ENCODE measurements at regions of chr5 and their contacts with region 1.

Region 1: DNA sequence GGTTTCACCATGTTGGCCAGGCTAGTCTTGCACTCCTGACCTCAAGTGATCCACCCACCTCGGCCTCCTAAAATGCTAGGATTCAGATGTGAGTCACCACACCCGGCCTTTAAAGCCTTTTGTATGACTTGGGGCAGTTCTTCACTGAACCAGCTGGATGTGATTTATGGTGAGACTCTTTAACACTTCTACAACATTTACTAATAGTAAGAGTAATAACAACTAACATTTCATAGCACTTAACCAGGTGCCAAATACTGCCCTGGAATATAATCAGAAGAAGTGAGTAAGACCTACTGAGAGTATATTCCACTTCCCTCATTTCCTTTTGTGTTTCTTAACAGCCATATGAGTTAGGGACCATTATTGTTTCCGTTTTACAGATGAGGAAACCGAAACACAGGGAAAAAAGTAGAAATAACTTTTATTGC is 10.0 kb downstream of the ZSWIM6 start:
- DNase-seq: no peak
- ATAC-seq: no peak
- H3K4me3 ChIP-seq: no peak overlapping the region
- H3K27ac ChIP-seq: no peak overlapping the region
- H3K4me1 ChIP-seq: peaks cover 10 to 28% (median 18%) of the 10 kb centered on the region in 3 donors
- H3K27me3 ChIP-seq: no peaks in the 10 kb centered on the region
- CTCF ChIP-seq: no peak

Region 2: DNA sequence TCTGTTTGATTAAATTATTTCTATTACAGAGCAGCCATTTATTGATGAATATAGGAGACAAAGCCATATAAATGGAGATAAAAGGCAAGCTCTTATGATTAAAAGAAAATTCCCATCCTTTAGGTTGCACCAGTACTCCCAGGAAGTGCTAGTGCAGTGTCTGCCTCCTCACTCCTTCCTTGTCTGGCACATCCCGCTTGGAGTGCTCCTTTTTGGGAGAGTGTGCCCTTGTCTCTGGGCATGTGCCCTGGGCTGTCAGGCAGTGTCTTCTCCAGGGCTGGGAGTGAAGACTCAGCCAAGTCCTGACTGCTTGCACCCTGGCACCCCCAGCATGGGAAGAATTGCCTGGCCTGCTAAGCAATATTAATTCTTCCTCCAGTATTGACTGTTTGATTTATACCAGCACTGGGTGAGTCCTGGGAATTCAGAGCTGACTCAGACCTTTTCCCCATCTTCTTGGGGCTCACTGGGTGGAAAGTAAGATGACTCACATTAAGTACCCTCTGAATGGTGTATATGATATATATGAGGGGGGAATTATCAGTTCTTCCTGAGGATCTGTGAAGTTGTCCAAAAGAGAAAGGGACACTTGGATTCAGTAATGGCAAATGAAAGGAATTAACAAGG is 52.1 kb after region 1 on chr5:
- intact Hi-C with region 1: loop called in 1 of 3 experiments (anchors 10 kb)
- DNase-seq: no peak
- ATAC-seq: no peak
- H3K4me3 ChIP-seq: no peak overlapping the region
- H3K27ac ChIP-seq: no peak overlapping the region
- H3K4me1 ChIP-seq: no peaks in the 10 kb centered on the region
- H3K27me3 ChIP-seq: no peaks in the 10 kb centered on the region
- CTCF ChIP-seq: no peak

Region 3: GRCh38 chr5:61575103-61575502 is 233.0 kb after region 1 on chr5:
- intact Hi-C with region 1: no loop called
- DNase-seq: peak in 1 of 6 donors; percentile 20
- ATAC-seq: peak in 3 of 4 donors; percentile 53 to 83 (median 79)
- H3K4me3 ChIP-seq: no peak overlapping the region
- H3K27ac ChIP-seq: no peak overlapping the region
- H3K4me1 ChIP-seq: peaks cover 0 to 7% (median 0%) of the 10 kb centered on the region in 3 donors
- H3K27me3 ChIP-seq: no peaks in the 10 kb centered on the region
- CTCF ChIP-seq: no peak

Measured in pancreas (tissue), 10 donors.